Esophagus muscularis mucosa (tissue), 4 donors: ENCODE measurements at regions of chr3 and their contacts with region 1.

Region 1: GRCh38 chr3:146065573-146066006 is 95.4 kb downstream of the PLOD2 start:
- DNase-seq: no peak
- H3K4me3 ChIP-seq: no peak overlapping the region
- H3K27ac ChIP-seq: no peak overlapping the region
- H3K4me1 ChIP-seq: peaks cover 5 to 21% (median 15%) of the 10 kb centered on the region in 4 donors
- H3K27me3 ChIP-seq: no peaks in the 10 kb centered on the region
- CTCF ChIP-seq: peak; percentile 72 to 79 (median 77)
- EP300 ChIP-seq: no peak
- POLR2A ChIP-seq: no peak

Region 2: GRCh38 chr3:146160964-146161662 is 95.5 kb after region 1 on chr3 and contains the start of gene PLOD2:
- intact Hi-C with region 1: loop called (anchors 2 kb)
- DNase-seq: no peak
- H3K4me3 ChIP-seq: peak within 1 kb of the TSS; percentile 83 to 93 (median 90)
- H3K27ac ChIP-seq: peak within 1 kb of the TSS; percentile 91 to 99 (median 96)
- H3K4me1 ChIP-seq: peaks cover 43 to 75% (median 75%) of the 10 kb centered on the region in 4 donors
- H3K27me3 ChIP-seq: no peaks in the 10 kb centered on the region
- CTCF ChIP-seq: no peak
- EP300 ChIP-seq: no peak
- POLR2A ChIP-seq: peak; percentile 67
- total RNA-seq, gene PLOD2: 48.2 to 84.7 (median 54.9) TPM

Region 3: GRCh38 chr3:146189519-146190173 is 124.1 kb after region 1 on chr3:
- intact Hi-C with region 1: loop called (anchors 1 kb)
- DNase-seq: no peak
- H3K4me3 ChIP-seq: no peak overlapping the region
- H3K27ac ChIP-seq: no peak overlapping the region
- H3K4me1 ChIP-seq: peaks cover 0 to 15% (median 14%) of the 10 kb centered on the region in 4 donors
- H3K27me3 ChIP-seq: no peaks in the 10 kb centered on the region
- CTCF ChIP-seq: peak; percentile 67 to 78 (median 68)
- EP300 ChIP-seq: no peak
- POLR2A ChIP-seq: no peak

Region 4: GRCh38 chr3:146326670-146327543 is 261.3 kb after region 1 on chr3:
- intact Hi-C with region 1: loop called (anchors 5 kb)
- DNase-seq: no peak
- H3K4me3 ChIP-seq: no peak overlapping the region
- H3K27ac ChIP-seq: no peak overlapping the region
- H3K4me1 ChIP-seq: peaks cover 0 to 8% (median 6%) of the 10 kb centered on the region in 4 donors
- H3K27me3 ChIP-seq: no peaks in the 10 kb centered on the region
- CTCF ChIP-seq: peak; percentile 58 to 69 (median 69)
- EP300 ChIP-seq: no peak
- POLR2A ChIP-seq: no peak

Region 5: DNA sequence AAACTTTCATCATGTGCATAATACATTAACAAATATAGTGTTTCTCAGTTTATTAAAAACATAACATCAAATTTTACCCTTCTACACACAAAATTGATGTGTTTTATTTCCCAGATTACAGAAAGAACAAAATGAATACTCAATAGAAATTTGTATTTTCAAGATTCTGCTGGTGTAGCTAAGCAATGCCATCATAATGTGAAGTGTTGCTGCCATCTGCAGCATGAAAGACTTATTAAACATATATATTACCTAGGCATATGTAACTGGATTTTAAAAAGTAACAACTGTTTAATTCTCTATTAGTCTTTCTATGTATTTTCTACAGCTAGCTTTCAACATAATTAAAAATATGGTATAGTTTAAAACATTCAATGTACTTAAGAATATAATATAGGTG is 512.1 kb after region 1 on chr3:
- intact Hi-C with region 1: loop called (anchors 10 kb)
- DNase-seq: no peak
- H3K4me3 ChIP-seq: no peak overlapping the region
- H3K27ac ChIP-seq: no peak overlapping the region
- H3K4me1 ChIP-seq: no peaks in the 10 kb centered on the region
- H3K27me3 ChIP-seq: no peaks in the 10 kb centered on the region
- CTCF ChIP-seq: peak; percentile 39 to 47 (median 43)
- EP300 ChIP-seq: no peak
- POLR2A ChIP-seq: no peak